ENCODE measurements at regions of chr11 and their contacts with region 1.

Region 1: DNA sequence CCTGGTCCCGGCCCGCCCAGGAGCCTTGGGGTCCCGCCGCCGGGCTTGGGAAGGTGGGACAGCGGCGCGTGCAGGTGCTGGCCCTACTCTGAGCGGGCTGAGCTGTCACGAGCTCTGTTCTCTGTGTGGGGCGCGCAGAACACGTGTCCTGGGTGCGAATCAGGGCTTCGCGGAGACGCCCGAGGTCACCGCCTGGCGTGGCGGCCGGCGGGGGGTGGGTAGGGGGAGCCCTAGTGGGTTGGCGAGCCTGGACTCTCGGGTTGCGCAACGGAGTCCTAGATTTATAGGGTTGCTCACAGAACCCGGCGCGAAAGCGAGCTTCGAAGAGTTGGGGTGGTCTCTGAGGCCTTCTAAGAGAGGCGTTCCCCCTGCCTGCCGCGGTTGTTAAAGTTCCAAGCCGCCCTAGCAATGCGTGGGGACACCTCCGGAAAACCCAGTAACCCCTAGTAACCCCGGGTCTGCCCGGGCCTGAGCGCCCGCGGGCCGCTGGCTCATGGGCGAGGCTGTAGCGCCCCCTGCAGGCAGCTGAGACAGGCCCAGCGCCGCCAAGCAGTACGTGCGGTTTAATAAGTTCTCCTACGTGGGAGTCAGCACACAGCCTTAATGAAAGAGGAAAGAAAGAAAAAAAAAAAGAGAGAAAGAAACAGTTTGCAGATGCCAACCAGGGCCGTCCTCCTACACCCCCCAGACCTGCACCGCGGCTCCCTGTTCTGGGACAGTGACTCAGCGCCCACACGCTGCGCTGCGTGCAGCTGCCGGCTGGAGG is 2.8 kb downstream of the ADM start:
- DNase-seq: peak; percentile 92
- H3K4me3 ChIP-seq: peak overlapping the region; percentile 62 to 80 (median 72)
- H3K27ac ChIP-seq: peak overlapping the region; percentile 54
- H3K4me1 ChIP-seq: peaks cover 45% of the 10 kb centered on the region
- H3K27me3 ChIP-seq: no peaks in the 10 kb centered on the region
- CTCF ChIP-seq: peak; percentile 87 to 92

Region 2: DNA sequence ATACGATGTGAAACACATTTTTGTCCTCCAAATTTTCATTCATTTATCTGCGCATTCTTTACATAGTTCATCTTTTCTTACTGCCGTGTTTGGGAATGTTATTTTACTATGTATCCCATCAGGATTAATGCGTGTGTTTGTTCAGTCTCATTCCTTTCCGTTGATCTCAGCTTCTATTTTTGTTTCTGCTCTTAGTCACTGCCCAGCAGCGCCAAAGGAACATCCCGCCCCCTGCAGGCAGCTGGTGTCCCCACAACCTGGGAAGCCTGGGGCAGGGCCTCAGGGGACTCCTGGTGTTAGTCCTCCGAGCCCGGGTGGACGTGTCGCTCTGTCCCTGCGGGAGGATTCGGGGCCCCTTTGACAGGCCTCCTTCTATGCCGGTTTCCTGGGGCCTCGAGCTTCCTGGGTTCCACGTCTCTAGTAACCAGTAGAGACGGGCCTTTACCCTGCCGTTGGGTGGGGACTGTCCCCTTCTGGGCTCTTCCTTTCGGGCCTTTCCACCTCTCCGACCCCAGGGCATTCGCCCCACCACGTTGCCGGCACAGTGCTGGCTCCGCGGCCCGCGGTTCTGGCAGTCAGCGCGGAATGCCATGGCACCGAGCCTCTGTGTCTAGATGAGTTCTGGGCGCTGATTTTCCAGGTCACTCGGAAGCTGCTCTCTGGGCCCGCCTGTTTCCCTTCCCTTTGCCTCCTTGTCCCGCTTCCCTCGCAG is 694.4 kb before region 1 on chr11:
- CTCF ChIA-PET with region 1: no interaction called
- dilution Hi-C with region 1: no loop called
- in situ Hi-C with region 1: loop called in 1 of 2 experiments (anchors 25 kb)
- intact Hi-C with region 1: loop called (anchors 1 kb)
- DNase-seq: peak; percentile 88
- H3K4me3 ChIP-seq: peak overlapping the region; percentile 6 to 26 (median 21)
- H3K27ac ChIP-seq: peak overlapping the region; percentile 91
- H3K4me1 ChIP-seq: peaks cover 27% of the 10 kb centered on the region
- H3K27me3 ChIP-seq: no peaks in the 10 kb centered on the region
- CTCF ChIP-seq: peak; percentile 78 to 97

Region 3: DNA sequence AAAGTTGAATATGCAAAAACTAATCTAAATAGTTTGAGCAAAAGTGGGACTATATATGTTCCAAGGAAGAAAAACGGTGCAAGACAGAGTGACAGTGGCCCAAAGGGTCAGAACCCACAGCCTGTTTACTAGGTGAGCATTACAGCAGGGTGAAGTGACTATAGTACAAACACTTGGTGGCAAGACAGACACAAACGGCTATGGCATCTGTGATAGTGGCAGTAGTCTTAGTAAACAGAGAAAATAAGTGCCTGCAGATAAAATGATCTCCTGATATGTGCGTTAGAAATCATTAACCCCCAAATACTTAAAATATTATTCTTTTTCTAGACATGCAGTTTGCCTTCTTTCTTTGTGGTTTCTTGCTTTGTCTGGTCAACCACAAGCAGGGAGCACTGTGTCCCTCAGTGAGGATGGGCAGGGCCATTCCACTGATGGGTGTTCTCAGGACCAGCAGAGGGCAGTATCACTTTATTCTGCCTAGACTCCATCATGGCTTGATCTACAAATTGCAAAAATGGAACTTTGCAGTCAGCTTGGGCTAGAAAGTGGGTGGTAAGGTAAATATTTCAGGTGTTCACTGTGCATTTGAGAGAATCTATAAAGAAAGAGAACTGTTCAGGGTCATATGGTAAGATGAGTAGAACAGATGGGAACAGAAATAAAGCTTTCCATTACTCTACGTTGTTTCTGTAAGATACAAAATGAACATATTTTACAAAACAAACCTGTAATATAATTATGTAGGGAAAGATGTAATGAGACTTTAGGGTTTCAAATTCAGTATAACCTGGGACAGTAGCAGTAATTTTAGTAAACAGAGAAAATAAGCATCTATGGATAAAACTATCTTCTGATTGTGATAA is 445.5 kb before region 1 on chr11:
- CTCF ChIA-PET with region 1: no interaction called
- dilution Hi-C with region 1: no loop called
- in situ Hi-C with region 1: loop called in 1 of 2 experiments (anchors 25 kb)
- intact Hi-C with region 1: loop called (anchors 1 kb)
- DNase-seq: peak; percentile 60
- H3K4me3 ChIP-seq: no peak overlapping the region
- H3K27ac ChIP-seq: no peak overlapping the region
- H3K4me1 ChIP-seq: peaks cover 6% of the 10 kb centered on the region
- H3K27me3 ChIP-seq: no peaks in the 10 kb centered on the region
- CTCF ChIP-seq: peak; percentile 90 to 91

Region 4: GRCh38 chr11:9982800-9983579 is 324.6 kb before region 1 on chr11:
- CTCF ChIA-PET with region 1: interaction called, 3 read pairs
- dilution Hi-C with region 1: no loop called
- in situ Hi-C with region 1: loop called in 1 of 2 experiments (anchors 25 kb)
- intact Hi-C with region 1: no loop called
- DNase-seq: peak; percentile 43
- H3K4me3 ChIP-seq: peak overlapping the region in 1 of 3 experiments; percentile 5
- H3K27ac ChIP-seq: peak overlapping the region; percentile 62
- H3K4me1 ChIP-seq: peaks cover 17% of the 10 kb centered on the region
- H3K27me3 ChIP-seq: no peaks in the 10 kb centered on the region
- CTCF ChIP-seq: no peak

Region 5: GRCh38 chr11:10181811-10182210 is 125.8 kb before region 1 on chr11:
- CTCF ChIA-PET with region 1: no interaction called
- dilution Hi-C with region 1: no loop called
- in situ Hi-C with region 1: no loop called
- intact Hi-C with region 1: loop called (anchors 1 kb)
- DNase-seq: no peak
- H3K4me3 ChIP-seq: no peak overlapping the region
- H3K27ac ChIP-seq: no peak overlapping the region
- H3K4me1 ChIP-seq: no peaks in the 10 kb centered on the region
- H3K27me3 ChIP-seq: no peaks in the 10 kb centered on the region
- CTCF ChIP-seq: peak; percentile 24 to 26

Region 6: DNA sequence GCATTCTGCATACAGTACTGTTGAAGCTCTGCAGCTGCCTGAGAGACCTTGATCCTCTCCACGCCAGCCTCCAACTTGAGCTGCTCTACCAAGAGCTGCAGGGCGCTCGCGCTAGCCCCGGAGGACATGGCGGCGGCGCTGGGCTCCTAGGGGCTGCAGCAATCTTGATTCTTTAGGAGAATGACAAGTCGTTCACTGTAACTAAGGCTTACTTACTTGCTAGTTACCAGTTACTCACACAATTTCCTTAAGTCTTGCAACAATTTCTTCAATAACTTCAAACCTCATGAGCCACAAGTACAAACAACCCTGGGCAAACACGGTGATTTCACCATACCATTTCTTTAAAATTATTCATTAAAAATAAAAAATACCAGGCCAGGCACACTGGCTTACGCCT is 35.5 kb before region 1 on chr11:
- CTCF ChIA-PET with region 1: no interaction called
- dilution Hi-C with region 1: no loop called
- in situ Hi-C with region 1: no loop called
- intact Hi-C with region 1: no loop called
- DNase-seq: peak; percentile 14
- H3K4me3 ChIP-seq: no peak overlapping the region
- H3K27ac ChIP-seq: no peak overlapping the region
- H3K4me1 ChIP-seq: no peaks in the 10 kb centered on the region
- H3K27me3 ChIP-seq: no peaks in the 10 kb centered on the region
- CTCF ChIP-seq: no peak

Region 7: DNA sequence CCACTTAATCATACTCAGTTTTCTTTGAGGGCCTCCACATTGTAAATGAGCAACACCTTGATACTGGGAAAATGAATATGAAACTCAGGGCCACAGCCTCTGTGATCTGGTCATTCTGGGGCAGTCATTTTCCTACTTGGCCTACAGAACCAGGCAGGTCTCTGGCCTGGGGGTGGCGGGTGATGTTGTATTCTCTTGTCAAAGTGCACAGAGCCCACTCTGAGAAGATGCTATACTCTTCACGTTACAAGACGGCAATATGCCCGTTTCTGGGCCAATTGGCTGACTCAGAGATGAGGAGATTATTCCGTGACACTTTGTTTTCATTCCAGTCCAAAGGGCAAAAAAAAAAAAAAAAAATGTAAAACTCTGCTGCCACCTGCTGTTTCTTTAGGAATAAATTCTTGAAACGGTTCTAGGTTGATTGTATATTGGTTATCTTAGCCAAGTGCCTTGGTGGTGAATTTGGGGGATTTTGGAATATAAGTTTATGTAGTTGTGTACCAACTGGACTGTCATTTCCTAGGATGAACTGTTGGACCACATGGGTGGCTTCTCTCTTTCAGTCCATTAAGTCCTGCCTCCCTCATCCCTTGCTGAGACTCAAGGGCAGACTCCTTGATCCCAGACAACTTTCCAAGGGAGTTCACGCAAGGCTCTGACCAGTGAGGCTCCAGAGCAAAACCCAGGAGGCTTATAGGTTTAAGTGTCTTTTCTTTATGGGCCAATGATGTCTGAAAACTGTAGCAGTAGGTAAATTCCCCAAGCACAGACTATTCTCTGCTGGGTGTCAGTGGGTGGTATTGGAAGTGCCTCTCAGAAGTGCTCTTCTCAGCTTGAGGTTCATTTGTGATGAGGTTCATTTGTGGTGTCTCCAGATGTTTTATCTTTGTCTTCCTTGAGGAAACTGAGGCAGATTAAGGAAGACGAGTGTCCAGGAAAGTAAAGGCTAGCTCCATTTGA is 15.5 kb after region 1 on chr11:
- CTCF ChIA-PET with region 1: interaction called, 3 read pairs
- dilution Hi-C with region 1: no loop called
- in situ Hi-C with region 1: no loop called
- intact Hi-C with region 1: loop called (anchors 1 kb)
- DNase-seq: peak; percentile 84
- H3K4me3 ChIP-seq: no peak overlapping the region
- H3K27ac ChIP-seq: peak overlapping the region; percentile 57
- H3K4me1 ChIP-seq: peaks cover 6% of the 10 kb centered on the region
- H3K27me3 ChIP-seq: no peaks in the 10 kb centered on the region
- CTCF ChIP-seq: peak; percentile 42 to 49

Region 8: DNA sequence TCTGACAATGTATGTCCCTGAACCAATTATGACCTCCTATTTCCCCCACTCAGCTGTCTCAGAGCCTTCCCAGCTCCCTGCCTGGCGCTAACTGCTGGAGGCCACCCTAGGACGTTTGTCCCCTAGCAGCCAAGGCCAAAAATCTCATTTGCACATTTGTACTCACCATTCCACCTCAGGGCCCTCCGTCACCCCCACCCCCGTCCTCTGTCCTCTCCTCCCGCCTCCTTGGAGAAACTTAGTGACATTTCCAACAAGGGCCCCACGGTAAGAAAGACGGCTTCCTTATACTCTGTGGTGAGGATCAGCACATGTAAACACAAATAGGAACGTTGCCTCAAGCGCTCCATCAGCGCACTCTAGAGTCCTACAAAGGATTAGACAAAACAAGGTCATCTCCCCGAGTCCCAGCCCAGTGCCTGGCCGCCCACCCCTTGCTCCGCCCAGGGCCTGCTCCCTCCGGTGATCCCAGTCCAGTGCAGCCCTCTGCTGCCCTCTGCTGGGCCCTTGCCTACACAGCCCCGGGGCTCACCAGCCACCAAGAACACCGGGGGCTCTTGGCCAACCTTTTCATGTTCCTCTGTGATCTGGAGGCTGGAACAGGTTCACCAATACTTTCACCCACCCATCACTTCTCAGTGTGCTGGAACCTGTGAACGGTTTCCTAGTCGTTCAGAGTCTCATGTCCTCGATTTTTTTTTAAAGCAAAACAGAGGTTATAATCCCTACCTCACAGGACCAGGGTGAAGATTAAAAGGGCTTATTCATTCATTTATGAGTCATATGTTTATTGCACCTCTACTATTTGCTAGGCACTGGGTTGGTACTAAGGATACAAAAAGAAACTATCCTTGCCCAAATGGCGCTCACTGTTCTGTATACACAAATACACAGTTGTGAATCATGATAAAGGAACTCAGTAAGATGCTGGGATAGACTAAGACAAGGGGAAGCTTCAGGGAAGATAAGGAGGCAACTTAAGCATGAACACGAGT is 428.2 kb after region 1 on chr11:
- CTCF ChIA-PET with region 1: no interaction called
- dilution Hi-C with region 1: no loop called
- in situ Hi-C with region 1: no loop called
- intact Hi-C with region 1: loop called (anchors 1 kb)
- DNase-seq: peak; percentile 89
- H3K4me3 ChIP-seq: peak overlapping the region; percentile 23 to 44 (median 34)
- H3K27ac ChIP-seq: peak overlapping the region; percentile 78
- H3K4me1 ChIP-seq: peaks cover 11% of the 10 kb centered on the region
- H3K27me3 ChIP-seq: no peaks in the 10 kb centered on the region
- CTCF ChIP-seq: peak; percentile 84 to 98